Activated B cell treated with CpG ODN at 0.5 μM for 24 hours (primary cell): ENCODE measurements at regions of chr6 and their contacts with region 1.

Region 1: GRCh38 chr6:149271348-149272340 is 45.9 kb upstream of the TAB2 start:
- DNase-seq: peak; percentile 31
- ATAC-seq: peak; percentile 90
- H3K4me3 Mint-ChIP-seq: peak overlapping the region; percentile 78
- H3K27ac Mint-ChIP-seq: peak overlapping the region; percentile 98
- H3K4me1 Mint-ChIP-seq: peaks cover 60% of the 10 kb centered on the region
- H3K27me3 Mint-ChIP-seq: no peaks in the 10 kb centered on the region
- CTCF ChIP-seq: no peak

Region 2: DNA sequence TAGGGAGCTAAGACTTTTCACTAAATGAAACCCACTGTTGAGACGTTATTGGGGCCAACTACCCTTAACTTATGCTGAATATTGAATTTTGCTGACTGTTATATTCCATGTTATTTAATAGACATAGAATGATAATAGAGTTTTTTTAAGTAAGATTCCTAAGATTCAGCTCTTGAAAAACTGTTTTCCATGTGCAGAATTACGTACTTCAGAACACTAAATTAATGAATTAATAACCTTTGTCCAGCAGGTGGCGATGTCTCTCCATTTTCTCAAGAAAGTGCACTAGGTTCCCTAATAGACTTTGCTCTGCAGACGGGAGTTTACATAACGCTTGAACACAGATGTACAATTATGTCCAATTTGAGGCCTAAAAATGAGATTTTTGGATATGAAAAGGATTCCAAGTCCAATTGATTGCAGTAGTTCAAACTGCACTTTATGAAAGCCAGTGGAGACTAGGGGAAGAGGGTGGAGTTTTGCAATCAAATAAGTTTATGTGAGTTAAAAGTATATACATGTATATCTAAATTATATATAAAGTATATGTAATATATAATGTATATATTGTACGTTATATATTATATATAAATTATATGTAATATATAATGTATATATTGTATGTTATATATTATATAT is 242.8 kb before region 1 on chr6:
- CTCF ChIA-PET with region 1: no interaction called
- POLR2A ChIA-PET with region 1: no interaction called
- intact Hi-C with region 1: no loop called
- DNase-seq: no peak
- ATAC-seq: peak; percentile 33
- H3K4me3 Mint-ChIP-seq: no peak overlapping the region
- H3K27ac Mint-ChIP-seq: peak overlapping the region; percentile 75
- H3K4me1 Mint-ChIP-seq: peaks cover 43% of the 10 kb centered on the region
- H3K27me3 Mint-ChIP-seq: no peaks in the 10 kb centered on the region
- CTCF ChIP-seq: peak; percentile 65

Region 3: GRCh38 chr6:149190224-149190831 is 81.3 kb before region 1 on chr6:
- CTCF ChIA-PET with region 1: interaction called, 5 read pairs
- POLR2A ChIA-PET with region 1: interaction called, 3 read pairs
- intact Hi-C with region 1: loop called (anchors 5 kb)
- DNase-seq: peak; percentile 56
- ATAC-seq: peak; percentile 82
- H3K4me3 Mint-ChIP-seq: no peak overlapping the region
- H3K27ac Mint-ChIP-seq: no peak overlapping the region
- H3K4me1 Mint-ChIP-seq: peaks cover 9% of the 10 kb centered on the region
- H3K27me3 Mint-ChIP-seq: no peaks in the 10 kb centered on the region
- CTCF ChIP-seq: no peak

Region 4: DNA sequence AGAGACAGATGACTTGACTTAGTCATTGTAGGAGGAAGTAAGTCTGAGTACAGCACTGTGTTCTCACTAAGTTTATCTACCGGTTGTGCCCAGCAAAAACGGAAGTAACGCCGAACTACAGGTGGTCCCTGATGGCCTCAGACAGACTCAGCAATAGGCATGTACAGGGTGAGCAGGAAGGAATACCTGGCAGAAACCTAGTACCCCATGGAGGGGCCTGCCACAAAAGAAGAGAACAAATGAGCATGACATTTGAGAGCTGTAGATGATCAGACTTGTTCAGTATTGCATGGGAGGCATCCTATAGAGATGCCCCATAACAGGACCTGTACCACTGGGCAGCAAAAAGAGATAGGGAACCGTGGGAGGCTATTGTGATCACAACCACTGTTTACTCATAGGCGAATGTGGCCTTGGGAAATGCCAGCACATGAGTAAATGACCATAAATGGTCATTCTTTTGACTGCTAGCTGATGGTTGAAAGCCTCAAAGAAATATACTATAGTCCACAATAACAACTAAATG is 60.5 kb before region 1 on chr6:
- CTCF ChIA-PET with region 1: no interaction called
- POLR2A ChIA-PET with region 1: interaction called, 8 read pairs
- intact Hi-C with region 1: loop called (anchors 2 kb)
- DNase-seq: no peak
- ATAC-seq: peak; percentile 96
- H3K4me3 Mint-ChIP-seq: no peak overlapping the region
- H3K27ac Mint-ChIP-seq: peak overlapping the region; percentile 87
- H3K4me1 Mint-ChIP-seq: peaks cover 12% of the 10 kb centered on the region
- H3K27me3 Mint-ChIP-seq: no peaks in the 10 kb centered on the region
- CTCF ChIP-seq: no peak

Region 5: DNA sequence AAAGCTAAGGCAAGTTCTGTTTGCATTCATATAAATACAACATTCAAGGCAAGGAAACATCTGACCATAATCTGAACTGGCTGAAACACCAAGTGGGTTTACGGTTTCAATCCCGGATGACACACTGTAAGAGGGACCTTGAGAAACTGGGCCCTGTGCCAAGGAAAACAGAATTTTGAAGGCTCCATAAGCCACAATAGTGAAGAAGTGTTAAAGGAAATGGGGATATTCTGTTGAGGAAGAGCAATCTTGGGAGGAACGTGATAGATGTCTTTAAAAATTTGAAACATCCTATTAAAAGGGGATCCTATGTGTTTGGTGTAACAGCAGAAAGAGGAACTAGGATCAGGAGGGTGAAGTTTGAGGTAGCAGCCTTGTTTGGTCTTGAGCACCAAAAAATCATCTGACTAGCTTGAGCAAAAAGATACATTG is 36.5 kb before region 1 on chr6:
- CTCF ChIA-PET with region 1: interaction called, 3 read pairs
- POLR2A ChIA-PET with region 1: interaction called, 6 read pairs
- intact Hi-C with region 1: loop called (anchors 5 kb)
- DNase-seq: no peak
- ATAC-seq: peak; percentile 81
- H3K4me3 Mint-ChIP-seq: peak overlapping the region; percentile 65
- H3K27ac Mint-ChIP-seq: peak overlapping the region; percentile 81
- H3K4me1 Mint-ChIP-seq: peaks cover 58% of the 10 kb centered on the region
- H3K27me3 Mint-ChIP-seq: no peaks in the 10 kb centered on the region
- CTCF ChIP-seq: no peak

Region 6: DNA sequence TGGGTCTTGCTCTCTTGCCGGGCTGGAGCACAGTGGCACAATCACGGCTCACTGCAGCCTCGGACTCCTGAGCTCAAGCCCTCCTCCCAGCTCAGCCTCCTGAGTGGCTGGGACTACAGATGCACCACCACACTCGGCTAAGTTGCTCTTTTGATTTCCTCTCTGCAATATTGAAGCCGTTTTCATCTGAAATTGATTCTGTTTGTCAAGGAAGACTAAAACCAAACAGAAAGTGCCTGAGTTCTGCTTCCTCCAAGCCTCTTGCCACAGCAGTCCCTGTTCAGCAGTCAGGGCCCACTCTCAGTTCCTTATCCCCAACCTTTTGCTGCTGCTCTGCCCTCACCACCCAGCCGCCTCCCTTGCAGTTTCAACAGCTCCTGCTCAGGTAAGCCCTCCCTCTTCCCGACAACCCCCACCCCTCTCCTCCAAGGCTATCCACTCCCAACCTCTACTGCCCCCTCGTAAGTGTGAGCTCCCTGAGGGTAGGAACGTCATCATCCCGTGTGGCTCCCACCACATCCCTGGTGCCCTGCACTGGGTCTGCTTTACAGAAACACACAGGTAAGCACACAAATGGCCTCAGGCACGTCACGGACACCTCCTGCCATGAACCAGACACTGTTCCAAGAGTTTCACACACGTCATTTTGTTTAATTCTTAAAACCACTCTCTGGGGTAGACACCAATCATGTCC is 24.8 kb before region 1 on chr6:
- CTCF ChIA-PET with region 1: no interaction called
- POLR2A ChIA-PET with region 1: interaction called, 14 read pairs
- intact Hi-C with region 1: loop called (anchors 1 kb)
- DNase-seq: peak; percentile 46
- ATAC-seq: peak; percentile 97
- H3K4me3 Mint-ChIP-seq: peak overlapping the region; percentile 82
- H3K27ac Mint-ChIP-seq: peak overlapping the region; percentile 88
- H3K4me1 Mint-ChIP-seq: peaks cover 50% of the 10 kb centered on the region
- H3K27me3 Mint-ChIP-seq: no peaks in the 10 kb centered on the region
- CTCF ChIP-seq: no peak